ENCODE measurements at regions of chr7 and their contacts with region 1.

Region 1: DNA sequence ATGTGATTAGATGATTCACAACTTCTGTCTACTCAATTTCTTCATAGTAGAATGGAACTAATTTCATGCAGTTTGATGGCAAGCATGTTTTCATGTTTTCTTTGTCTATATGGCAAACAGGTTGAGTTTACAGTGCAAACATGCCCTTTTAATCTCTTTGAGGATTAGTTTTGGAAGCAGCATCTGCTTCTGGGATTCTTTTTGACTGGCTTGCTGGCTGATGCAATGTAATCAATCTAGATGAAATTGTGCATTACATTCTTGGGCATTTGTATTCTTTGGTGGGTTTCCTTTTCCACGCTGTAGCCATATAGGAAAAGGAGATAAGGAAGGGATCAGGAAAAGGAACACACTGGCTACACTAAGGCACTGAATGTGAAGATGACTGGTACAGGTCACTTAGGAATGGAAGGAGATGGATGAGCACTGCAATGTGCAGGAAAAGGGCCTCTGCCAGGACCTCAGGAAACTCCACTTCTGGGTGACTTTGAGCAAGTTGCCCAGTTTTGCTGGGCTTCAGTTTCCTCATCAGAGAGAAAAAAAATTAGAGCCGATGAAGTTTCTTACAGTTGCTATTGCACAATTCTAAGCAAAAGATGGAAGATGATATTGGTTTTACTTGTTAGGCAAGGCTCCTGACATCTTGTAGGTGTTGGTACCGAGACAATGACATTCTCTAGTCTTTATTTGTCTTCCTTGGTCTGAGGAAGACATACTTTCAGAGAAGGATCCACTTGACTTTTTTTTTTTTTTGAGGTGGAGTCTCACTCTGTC is 269.1 kb downstream of the SUGCT start:
- DNase-seq: no peak
- H3K4me3 ChIP-seq: no peak overlapping the region
- CTCF ChIP-seq: no peak

Region 2: GRCh38 chr7:40419806-40420205 is 15.9 kb after region 1 on chr7:
- CTCF ChIA-PET with region 1: interaction called, 12 read pairs
- POLR2A ChIA-PET with region 1: no interaction called
- DNase-seq: no peak
- H3K4me3 ChIP-seq: no peak overlapping the region
- CTCF ChIP-seq: no peak

Region 3: DNA sequence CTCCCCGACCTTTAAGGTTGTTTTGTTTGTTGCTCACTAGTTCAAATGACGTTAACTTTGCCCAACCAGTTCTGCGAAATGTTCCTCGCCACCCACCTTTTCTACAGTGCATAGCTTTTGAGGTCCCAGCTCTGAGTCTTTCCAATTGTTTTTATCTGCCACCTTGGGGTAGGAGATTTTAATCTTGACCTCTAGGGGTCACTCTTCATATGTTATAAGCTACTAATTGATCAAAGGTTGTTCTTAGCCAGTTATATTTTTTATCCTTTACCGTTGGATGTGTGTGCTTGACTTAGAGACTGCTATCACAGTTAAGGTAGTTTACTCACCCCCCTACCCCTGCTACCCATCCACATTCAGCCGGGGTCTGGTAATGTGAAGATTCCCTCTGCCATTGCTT is 103.3 kb after region 1 on chr7:
- CTCF ChIA-PET with region 1: no interaction called
- POLR2A ChIA-PET with region 1: no interaction called
- DNase-seq: no peak
- H3K4me3 ChIP-seq: no peak overlapping the region
- CTCF ChIP-seq: no peak